Posterior vena cava (tissue), 2 donors: ENCODE measurements at regions of chr6 and their contacts with region 1.

Region 1: GRCh38 chr6:13846841-13847240 is 32.5 kb upstream of the MCUR1 start:
- DNase-seq: no peak

Region 2: DNA sequence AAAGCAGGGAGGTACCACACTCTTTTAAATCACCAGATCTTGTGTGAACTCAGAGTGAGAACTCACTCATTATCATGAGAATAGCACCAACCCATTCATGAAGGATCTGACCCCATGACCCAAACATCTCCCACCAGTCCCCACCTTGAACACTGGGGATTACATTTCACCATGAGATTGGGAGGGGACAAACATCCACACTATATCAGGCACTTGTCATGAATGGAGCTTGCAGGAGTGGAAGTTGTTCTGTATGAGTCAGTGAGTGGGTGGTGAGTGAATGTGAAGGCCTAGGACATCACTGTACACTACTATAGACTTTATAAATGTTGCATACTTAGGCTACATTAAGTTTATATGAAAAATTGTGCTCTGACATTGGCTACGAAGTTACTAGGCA is 30.2 kb after region 1 on chr6:
- intact Hi-C with region 1: loop called in 1 of 2 experiments (anchors 1 kb)
- DNase-seq: no peak